ENCODE measurements at regions of chr17 and their contacts with region 1.

Region 1: DNA sequence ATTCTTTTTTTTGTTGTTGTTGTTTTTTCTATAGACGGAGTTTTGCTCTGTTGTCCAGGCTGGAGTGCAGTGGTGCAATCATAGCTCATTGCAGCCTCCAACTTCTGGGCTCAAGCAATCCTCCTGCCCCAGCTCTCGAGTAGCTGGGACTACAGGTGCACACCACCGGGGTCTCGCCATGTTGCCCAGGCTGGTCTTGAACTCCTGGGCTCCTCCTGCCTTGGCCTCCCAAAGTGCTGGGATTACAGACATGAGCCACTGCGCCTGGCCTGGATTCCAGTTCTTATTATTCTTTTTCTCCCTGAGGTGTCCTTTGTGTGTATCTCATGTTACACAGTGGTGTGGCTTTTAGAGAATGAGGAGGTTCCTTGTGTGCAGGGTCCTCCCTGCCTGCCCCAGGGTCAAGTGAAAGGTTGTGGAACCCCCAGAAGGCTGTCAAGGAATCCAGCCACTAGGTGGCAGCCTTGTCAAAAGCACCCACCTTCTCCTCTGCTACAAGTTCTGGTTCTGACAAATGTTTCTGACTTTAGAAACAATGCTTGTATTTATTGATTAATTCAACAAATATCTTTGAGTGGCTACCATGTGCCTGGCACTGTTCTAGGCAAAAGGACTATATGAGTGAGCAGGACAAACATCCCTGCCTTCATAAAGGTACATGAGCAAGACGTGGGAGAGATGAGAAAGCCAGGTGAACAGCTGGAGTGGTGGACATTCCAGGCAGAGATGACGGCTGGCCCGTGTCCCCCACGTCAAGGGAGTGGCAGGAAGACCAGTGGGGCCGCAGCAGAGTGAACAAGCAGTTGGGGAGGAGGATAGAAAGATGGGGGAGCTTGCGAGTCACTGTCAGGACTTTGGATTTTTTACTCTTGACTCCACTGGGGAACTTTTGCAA is 112.4 kb downstream of the SPECC1 start:
- DNase-seq: peak in 1 of 2 donors; percentile 36
- H3K4me3 ChIP-seq: no peak overlapping the region
- CTCF ChIP-seq: no peak
- POLR2A ChIP-seq: no peak

Region 2: DNA sequence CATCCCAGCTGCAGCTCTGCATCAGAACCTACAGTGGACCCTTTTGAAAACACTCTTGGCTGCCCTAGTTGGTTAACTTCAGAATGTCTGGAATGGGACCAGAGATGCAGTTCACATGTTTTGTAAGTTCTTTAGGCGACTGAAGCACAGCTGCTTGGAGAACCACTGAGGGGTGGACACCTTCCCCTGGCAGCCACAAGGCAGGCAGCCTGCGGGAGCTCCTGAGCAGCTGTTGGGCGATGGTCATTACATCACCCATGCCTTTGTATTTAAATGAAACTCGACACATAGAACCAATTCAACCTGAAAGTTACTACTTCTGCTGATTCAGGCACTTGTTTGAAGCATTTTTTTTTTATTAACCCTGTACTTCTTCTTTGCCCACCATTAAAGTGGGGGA is 194.2 kb after region 1 on chr17:
- intact Hi-C with region 1: loop called (anchors 10 kb)
- DNase-seq: no peak
- H3K4me3 ChIP-seq: no peak overlapping the region
- CTCF ChIP-seq: no peak
- POLR2A ChIP-seq: no peak